ENCODE measurements at regions of chr3 and their contacts with region 1.

Region 1: GRCh38 chr3:16177962-16178627 is 3.6 kb downstream of the GALNT15 start:
- DNase-seq: peak; percentile 42
- ATAC-seq: peak; percentile 90
- H3K4me3 ChIP-seq: no peak overlapping the region
- H3K27ac ChIP-seq: no peak overlapping the region
- H3K4me1 ChIP-seq: peaks cover 19% of the 10 kb centered on the region
- H3K27me3 ChIP-seq: peaks cover 3 to 56% of the 10 kb centered on the region in 2 experiments; a peak in 3 of 5 replicates
- CTCF ChIP-seq: peak; percentile 98
- EP300 ChIP-seq: no peak
- POLR2A ChIP-seq: no peak
- RAD21 ChIP-seq: peak; percentile 96

Region 2: DNA sequence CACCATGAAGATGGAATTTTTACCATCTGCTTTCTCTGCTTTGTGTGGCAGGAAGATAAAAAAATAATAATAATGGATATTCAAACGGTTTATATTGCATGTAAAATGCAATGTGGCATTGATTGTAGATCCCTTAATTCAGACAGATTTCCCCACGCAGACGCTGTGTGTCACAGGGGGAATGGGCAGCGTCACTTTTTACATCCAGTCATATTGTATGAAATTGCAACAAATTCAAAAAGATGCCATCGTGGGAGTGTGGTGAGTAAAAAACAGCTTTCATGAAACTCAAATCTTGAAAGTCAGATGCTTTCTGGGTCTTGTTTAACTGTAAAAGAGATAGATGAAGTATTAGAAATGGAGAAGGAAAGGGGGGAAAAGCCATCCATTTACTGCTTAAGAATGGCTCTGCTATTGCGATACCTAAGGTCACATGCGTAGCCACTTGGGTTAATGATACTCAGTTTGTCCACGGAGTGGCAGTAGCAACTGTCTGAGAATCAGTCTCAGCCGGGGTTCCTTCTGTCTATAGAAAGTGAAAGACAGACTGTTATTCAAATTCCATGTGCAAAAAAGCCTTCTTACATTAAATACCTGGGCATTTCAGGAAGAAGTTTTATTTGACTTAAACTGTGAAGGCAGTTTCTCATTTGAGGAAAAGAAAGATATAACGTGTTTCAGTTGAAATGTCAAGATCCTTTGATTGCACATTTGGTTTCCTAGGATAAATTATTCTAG is 548.1 kb before region 1 on chr3:
- CTCF ChIA-PET with region 1: no interaction called
- POLR2A ChIA-PET with region 1: no interaction called
- in situ Hi-C with region 1: no loop called
- intact Hi-C with region 1: loop called (anchors 5 kb)
- DNase-seq: peak; percentile 62
- ATAC-seq: peak; percentile 98
- H3K4me3 ChIP-seq: no peak overlapping the region
- H3K27ac ChIP-seq: no peak overlapping the region
- H3K4me1 ChIP-seq: peaks cover 13% of the 10 kb centered on the region
- H3K27me3 ChIP-seq: no peaks in the 10 kb centered on the region
- CTCF ChIP-seq: peak; percentile 77
- EP300 ChIP-seq: no peak
- POLR2A ChIP-seq: no peak
- RAD21 ChIP-seq: peak; percentile 55

Region 3: DNA sequence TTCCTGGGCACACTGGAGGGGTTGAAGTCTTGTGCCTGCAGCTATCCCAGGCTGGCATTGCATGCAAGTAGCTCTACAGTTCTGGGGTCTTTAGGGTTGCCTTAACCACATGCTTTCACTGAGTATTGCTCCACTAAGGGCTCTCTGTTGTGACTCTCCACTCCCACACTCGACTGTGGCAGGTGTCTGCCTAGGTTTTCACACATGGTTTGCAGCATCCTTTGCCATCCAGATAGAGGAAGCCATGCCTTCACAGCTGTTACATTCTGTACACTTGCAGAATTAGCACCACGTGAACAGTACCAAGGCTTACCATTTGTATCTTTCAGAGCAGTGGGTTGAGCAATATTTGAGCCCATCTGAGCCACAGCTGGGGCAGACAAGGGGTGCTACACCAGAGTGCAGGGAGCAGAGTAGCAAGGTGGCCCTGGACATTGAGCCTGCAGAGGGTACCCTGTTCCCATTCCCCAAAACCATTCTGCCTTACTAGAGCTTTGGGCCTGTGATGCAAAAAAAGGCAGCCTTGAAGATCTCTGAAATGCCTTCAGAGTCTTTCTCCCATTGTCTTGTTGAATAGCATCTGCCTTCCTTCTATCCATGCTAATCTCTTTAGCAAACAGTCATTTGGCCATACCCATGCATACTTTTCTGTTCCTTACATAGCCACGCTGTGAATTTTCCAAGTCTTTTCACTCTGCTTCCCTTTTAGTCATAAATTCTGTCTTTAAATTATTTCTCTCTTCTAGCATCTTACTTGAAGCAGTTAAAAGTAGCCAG is 611.4 kb after region 1 on chr3:
- CTCF ChIA-PET with region 1: no interaction called
- POLR2A ChIA-PET with region 1: no interaction called
- in situ Hi-C with region 1: no loop called
- intact Hi-C with region 1: no loop called
- DNase-seq: no peak
- ATAC-seq: no peak
- H3K4me3 ChIP-seq: no peak overlapping the region
- H3K27ac ChIP-seq: no peak overlapping the region
- H3K4me1 ChIP-seq: no peaks in the 10 kb centered on the region
- H3K27me3 ChIP-seq: no peaks in the 10 kb centered on the region
- CTCF ChIP-seq: no peak
- EP300 ChIP-seq: no peak
- POLR2A ChIP-seq: no peak
- RAD21 ChIP-seq: no peak